ENCODE measurements at regions of chr12 and their contacts with region 1.

Region 1: DNA sequence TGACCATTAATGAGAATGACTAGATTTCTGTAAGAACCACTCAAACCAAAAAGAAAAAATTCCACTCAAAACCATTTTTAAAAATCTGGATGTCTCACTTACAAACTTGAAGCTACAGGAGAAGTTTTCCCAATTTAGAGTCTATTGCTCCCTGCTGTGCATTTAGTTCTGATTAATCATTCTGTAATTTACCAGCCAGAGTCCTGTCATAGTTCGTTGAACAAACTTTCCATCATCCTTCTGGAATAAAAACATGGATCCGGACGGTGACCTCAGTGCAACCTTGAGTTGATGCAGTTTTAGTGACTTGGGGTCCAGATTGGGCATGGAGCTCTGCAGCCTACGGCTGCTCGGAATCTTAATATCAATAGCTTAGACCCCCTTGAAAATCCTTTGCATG is 73.4 kb downstream of the PRMT8 start:
- DNase-seq: no peak
- H3K4me3 ChIP-seq: no peak overlapping the region
- H3K27ac ChIP-seq: no peak overlapping the region
- H3K4me1 ChIP-seq: no peaks in the 10 kb centered on the region
- H3K27me3 ChIP-seq: peaks cover 0 to 5% of the 10 kb centered on the region in 2 donors
- CTCF ChIP-seq: no peak
- POLR2A ChIP-seq: no peak

Region 2: DNA sequence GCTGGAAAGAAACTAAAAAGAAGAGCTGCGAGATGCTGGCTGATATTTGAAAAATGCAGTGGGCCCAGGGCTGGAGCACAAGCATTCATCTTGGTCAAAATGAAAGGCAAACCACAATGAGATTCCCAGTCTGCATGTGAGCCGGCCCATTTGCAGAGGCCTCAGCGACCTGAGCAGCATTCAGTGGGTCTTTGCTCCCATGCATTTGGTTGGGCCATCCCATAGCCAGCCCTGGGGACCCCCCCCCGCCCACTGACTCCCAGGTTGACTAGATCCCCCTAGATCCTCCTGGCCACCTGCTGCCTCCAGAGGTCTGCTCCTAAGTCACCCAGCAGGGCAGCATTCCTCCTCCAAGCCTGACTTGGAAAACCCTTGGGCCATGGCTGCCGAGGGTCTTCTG is 13.6 kb before region 1 on chr12:
- intact Hi-C with region 1: loop called (anchors 1 kb)
- DNase-seq: no peak
- H3K4me3 ChIP-seq: no peak overlapping the region
- H3K27ac ChIP-seq: no peak overlapping the region
- H3K4me1 ChIP-seq: no peaks in the 10 kb centered on the region
- H3K27me3 ChIP-seq: no peaks in the 10 kb centered on the region
- CTCF ChIP-seq: no peak
- POLR2A ChIP-seq: no peak

Measured in breast epithelium (tissue), 4 donors.